ENCODE measurements at regions of chr16 and their contacts with region 1.

Region 1: DNA sequence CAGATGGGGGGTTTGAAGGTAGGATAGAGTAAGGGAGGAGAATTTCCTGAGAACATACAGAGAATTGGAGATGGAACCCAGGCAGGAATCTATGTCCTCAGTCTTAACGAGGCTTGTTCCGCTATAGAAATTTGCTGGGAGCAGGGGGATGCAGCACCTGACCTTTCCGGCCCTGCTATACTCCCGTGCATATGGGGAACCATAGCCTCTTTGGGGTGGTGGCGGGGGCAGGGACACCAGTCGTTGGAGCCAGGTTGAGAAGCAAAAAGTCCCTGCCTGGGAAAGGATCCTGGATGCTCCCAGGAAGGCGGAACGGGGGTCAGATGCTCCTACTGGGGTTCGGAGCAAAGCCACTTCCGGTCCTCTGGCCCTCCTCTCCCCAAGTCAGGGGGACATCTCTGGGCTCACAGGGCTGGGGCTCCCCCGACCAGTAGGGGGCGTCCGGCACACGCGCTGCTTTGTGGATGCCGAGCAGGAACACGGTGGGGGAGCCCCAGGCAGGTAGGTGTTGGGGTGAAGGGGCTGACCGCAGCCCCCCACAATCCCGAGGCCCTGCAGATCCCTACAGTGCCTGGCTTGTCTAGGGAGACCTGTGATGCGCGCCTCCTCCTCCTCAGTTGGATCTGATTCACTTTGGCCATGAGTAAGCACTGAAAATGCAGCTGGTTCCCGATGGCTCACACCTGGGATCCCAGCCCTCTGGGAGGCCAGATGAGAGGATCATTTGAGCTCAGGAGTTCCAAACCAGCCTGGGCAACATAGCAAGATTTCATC is 15.5 kb upstream of the TFAP4 start:
- DNase-seq: peak; percentile 68 to 86 (median 76)
- H3K4me3 ChIP-seq: no peak overlapping the region
- H3K4me3 Mint-ChIP-seq: no peak overlapping the region
- H3K27ac ChIP-seq: no peak overlapping the region
- H3K27ac Mint-ChIP-seq: no peak overlapping the region
- H3K4me1 ChIP-seq: peaks cover 10% of the 10 kb centered on the region
- H3K4me1 Mint-ChIP-seq: peaks cover 6 to 14% (median 9%) of the 10 kb centered on the region in 3 donors
- H3K27me3 ChIP-seq: no peaks in the 10 kb centered on the region
- H3K27me3 Mint-ChIP-seq: peaks cover 9 to 34% of the 10 kb centered on the region in 2 donors

Region 2: GRCh38 chr16:4214215-4214621 is 74.1 kb before region 1 on chr16:
- CTCF ChIA-PET with region 1: no interaction called
- POLR2A ChIA-PET with region 1: no interaction called
- DNase-seq: no peak
- H3K4me3 ChIP-seq: no peak overlapping the region
- H3K4me3 Mint-ChIP-seq: no peak overlapping the region
- H3K27ac ChIP-seq: no peak overlapping the region
- H3K27ac Mint-ChIP-seq: no peak overlapping the region
- H3K4me1 ChIP-seq: no peaks in the 10 kb centered on the region
- H3K4me1 Mint-ChIP-seq: no peaks in the 10 kb centered on the region
- H3K27me3 ChIP-seq: no peaks in the 10 kb centered on the region
- H3K27me3 Mint-ChIP-seq: peaks cover 3 to 25% of the 10 kb centered on the region in 2 donors

Region 3: DNA sequence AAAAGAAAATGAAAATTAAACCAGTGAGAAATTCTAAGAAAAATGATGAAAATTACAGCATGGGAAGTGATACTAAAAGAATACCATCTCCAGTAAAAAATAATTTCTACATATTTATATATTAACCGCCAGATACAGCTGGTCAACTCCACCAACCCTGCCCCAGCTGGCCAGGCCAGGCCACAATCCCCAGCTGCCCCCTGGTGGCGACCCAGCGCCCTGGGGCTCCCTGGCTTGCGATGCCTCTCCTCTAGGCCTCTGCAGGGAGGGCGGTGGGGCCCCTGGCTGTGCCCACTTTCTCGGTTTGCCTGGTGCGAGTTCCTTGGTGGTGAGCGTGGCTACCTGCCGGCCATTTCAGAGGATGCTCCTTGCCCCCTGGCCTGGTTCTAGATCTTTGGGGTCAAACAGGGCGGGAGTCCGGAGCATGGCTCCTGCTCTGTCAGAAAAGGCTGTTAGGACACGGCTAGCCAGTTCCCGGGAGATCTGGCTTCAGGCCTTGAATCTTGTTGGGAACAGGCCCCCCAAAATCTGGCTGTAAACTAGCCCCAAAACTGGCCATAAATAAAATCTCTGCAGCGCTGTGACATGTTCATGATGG is 42.0 kb after region 1 on chr16:
- CTCF ChIA-PET with region 1: interaction called, 72 read pairs
- POLR2A ChIA-PET with region 1: no interaction called
- DNase-seq: peak; percentile 53 to 74 (median 68)
- H3K4me3 ChIP-seq: no peak overlapping the region
- H3K4me3 Mint-ChIP-seq: no peak overlapping the region
- H3K27ac ChIP-seq: no peak overlapping the region
- H3K27ac Mint-ChIP-seq: no peak overlapping the region
- H3K4me1 ChIP-seq: peaks cover 6% of the 10 kb centered on the region
- H3K4me1 Mint-ChIP-seq: peaks cover 0 to 10% (median 0%) of the 10 kb centered on the region in 3 donors
- H3K27me3 ChIP-seq: no peaks in the 10 kb centered on the region
- H3K27me3 Mint-ChIP-seq: peaks cover 0 to 7% of the 10 kb centered on the region in 2 donors

Measured in CD8-positive, alpha-beta memory T cell (primary cell).